Thyroid gland (tissue), 4 donors: ENCODE measurements at regions of chr1 and their contacts with region 1.

Region 1: GRCh38 chr1:28877132-28877781 is 37.1 kb upstream of the EPB41 start:
- DNase-seq: peak; percentile 75 to 79
- H3K4me3 ChIP-seq: no peak overlapping the region
- H3K27ac ChIP-seq: no peak overlapping the region
- H3K4me1 ChIP-seq: peaks cover 0 to 5% of the 10 kb centered on the region in 2 donors
- H3K27me3 ChIP-seq: no peaks in the 10 kb centered on the region
- CTCF ChIP-seq: peak; percentile 71 to 93 (median 87)
- POLR2A ChIP-seq: no peak

Region 2: DNA sequence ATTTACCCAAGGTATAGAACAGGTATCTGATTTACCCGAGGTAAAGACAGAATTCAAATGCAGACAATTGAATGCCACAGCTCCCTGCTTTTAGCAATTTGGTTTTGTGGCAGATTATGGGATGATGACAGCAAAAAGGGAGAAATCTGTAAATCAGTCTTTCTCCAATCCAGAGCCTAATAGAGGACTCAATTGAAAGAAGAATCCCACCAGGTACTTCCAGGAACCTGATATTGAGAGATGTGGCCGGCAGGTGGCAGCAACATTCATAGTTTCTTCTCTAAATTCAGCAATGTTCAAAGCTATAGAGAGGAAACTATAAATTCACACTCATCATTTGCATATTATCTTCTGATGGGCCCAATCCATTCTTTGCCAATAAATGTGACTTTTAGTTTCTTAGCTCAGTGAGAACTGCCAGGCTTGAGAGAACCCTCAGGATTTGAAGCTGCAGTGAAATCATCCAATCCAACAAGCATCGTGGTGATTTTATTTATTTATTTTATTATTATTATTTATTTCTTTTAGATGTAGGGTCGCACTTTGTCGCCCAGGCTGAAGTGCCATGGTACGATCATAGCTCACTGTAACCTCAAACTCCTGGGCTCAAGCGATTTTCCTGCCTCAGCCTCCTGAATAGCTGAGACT is 517.5 kb before region 1 on chr1:
- intact Hi-C with region 1: loop called (anchors 10 kb)
- DNase-seq: peak; percentile 80 to 83
- H3K4me3 ChIP-seq: no peak overlapping the region
- H3K27ac ChIP-seq: no peak overlapping the region
- H3K4me1 ChIP-seq: no peaks in the 10 kb centered on the region
- H3K27me3 ChIP-seq: no peaks in the 10 kb centered on the region
- CTCF ChIP-seq: peak in 5 of 6 experiments; percentile 44 to 69 (median 64)
- POLR2A ChIP-seq: no peak

Region 3: DNA sequence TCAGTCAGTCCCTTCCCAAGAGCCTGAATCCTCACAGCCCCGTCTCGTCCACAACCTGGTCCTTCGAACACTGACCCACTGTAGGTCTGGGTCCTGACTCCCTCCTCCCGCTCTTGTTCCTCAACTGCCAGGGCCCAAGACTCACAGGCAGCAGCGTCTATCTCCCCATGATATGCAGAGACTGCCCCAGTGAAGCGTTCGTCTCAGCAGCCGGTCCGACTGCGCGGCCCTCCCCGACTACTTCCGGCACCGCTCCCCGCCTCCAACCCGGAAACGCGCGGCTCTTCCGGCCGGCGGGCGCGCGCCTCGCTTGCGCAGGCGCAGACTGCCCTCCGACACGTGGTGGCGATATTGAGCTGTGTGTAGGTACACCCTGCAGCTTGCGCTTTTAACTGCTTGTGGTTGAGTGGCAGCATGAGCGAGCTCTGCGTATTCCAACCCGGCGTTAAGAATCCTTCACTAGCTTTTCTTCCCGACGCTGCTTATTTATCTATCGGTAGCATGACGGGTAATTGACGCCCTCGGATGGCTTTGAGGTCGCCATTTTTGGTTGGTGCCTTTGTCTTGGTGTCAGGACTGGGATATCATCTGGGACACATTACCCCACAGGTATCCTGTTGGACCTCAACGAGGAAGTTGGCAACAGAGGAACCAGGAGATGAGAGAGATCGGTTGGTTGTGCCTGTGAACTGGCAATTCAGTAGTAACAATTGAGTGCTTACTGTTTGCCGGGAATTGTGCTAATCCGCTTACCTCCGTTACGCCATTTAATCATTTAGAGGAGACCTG is 234.2 kb before region 1 on chr1 and contains the start of gene TAF12:
- intact Hi-C with region 1: loop called (anchors 10 kb)
- DNase-seq: peak; percentile 90
- H3K4me3 ChIP-seq: peak within 1 kb of the TSS; percentile 62 to 98 (median 67)
- H3K27ac ChIP-seq: peak within 1 kb of the TSS; percentile 74 to 84 (median 77)
- H3K4me1 ChIP-seq: peaks cover 15 to 26% of the 10 kb centered on the region in 2 donors
- H3K27me3 ChIP-seq: no peaks in the 10 kb centered on the region
- CTCF ChIP-seq: peak in 2 of 6 experiments; percentile 37 to 52
- POLR2A ChIP-seq: peak; percentile 77 to 98
- total RNA-seq, gene TAF12: 15.4 to 25.4 (median 18.4) TPM

Region 4: DNA sequence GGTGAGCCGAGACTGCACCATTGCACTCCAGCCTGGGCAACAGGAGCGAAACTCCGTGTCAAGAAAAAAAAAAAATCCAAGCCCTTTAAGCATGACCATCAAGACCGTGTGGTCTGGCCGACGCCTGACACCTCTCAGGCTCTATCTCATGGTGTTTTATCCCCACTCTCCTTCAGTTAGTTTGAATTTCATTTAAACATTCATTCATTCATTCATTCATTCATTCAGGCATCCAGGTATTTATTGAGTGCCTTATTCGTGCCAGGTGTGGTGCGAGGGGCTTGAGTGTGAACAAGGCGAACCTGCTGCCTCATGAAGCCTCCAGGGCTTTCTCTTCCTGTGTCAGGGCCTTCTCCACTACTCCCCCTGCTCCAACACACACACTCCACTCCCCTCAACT is 87.8 kb before region 1 on chr1:
- intact Hi-C with region 1: loop called (anchors 5 kb)
- DNase-seq: no peak
- H3K4me3 ChIP-seq: no peak overlapping the region
- H3K27ac ChIP-seq: no peak overlapping the region
- H3K4me1 ChIP-seq: no peaks in the 10 kb centered on the region
- H3K27me3 ChIP-seq: no peaks in the 10 kb centered on the region
- CTCF ChIP-seq: no peak
- POLR2A ChIP-seq: no peak

Region 5: GRCh38 chr1:29033829-29034466 is 156.7 kb after region 1 on chr1:
- intact Hi-C with region 1: loop called (anchors 5 kb)
- DNase-seq: no peak
- H3K4me3 ChIP-seq: no peak overlapping the region
- H3K27ac ChIP-seq: no peak overlapping the region
- H3K4me1 ChIP-seq: no peaks in the 10 kb centered on the region
- H3K27me3 ChIP-seq: no peaks in the 10 kb centered on the region
- CTCF ChIP-seq: peak in 4 of 6 experiments; percentile 44 to 79 (median 66)
- POLR2A ChIP-seq: no peak